ENCODE measurements at regions of chr4 and their contacts with region 1.

Region 1: GRCh38 chr4:175560604-175561003 is 251.5 kb downstream of the GPM6A start:
- DNase-seq: no peak
- ATAC-seq: no peak
- H3K4me3 ChIP-seq: no peak overlapping the region
- H3K27ac ChIP-seq: no peak overlapping the region
- H3K4me1 ChIP-seq: no peaks in the 10 kb centered on the region
- H3K27me3 ChIP-seq: no peaks in the 10 kb centered on the region
- CTCF ChIP-seq: peak in 5 of 12 donors; percentile 23 to 44 (median 32)
- POLR2A ChIP-seq: no peak

Region 2: DNA sequence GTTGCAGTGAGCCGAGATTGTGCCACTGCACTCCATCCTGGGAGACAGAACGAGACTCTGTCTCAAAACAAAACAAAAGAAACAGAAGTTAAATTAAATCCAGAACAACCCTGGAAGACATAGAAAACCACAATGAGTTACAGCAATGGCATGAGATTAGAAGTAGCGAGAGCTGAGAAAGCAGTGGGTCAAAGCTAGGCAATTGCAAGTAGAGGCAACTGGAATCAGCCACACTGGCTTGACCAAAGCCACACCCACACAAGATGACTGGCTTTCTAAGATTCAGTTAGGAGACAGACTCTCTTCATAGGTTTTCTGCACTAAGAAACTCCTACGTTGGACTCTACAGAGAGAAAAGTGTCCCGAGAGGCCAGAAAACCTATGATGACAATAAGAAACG is 191.5 kb before region 1 on chr4:
- intact Hi-C with region 1: no loop called
- DNase-seq: no peak
- ATAC-seq: no peak
- H3K4me3 ChIP-seq: no peak overlapping the region
- H3K27ac ChIP-seq: no peak overlapping the region
- H3K4me1 ChIP-seq: no peaks in the 10 kb centered on the region
- H3K27me3 ChIP-seq: no peaks in the 10 kb centered on the region
- CTCF ChIP-seq: no peak
- POLR2A ChIP-seq: no peak

Region 3: GRCh38 chr4:175419239-175419767 is 141.3 kb before region 1 on chr4:
- intact Hi-C with region 1: no loop called
- DNase-seq: no peak
- ATAC-seq: no peak
- H3K4me3 ChIP-seq: no peak overlapping the region
- H3K27ac ChIP-seq: no peak overlapping the region
- H3K4me1 ChIP-seq: no peaks in the 10 kb centered on the region
- H3K27me3 ChIP-seq: no peaks in the 10 kb centered on the region
- CTCF ChIP-seq: no peak
- POLR2A ChIP-seq: no peak

Region 4: DNA sequence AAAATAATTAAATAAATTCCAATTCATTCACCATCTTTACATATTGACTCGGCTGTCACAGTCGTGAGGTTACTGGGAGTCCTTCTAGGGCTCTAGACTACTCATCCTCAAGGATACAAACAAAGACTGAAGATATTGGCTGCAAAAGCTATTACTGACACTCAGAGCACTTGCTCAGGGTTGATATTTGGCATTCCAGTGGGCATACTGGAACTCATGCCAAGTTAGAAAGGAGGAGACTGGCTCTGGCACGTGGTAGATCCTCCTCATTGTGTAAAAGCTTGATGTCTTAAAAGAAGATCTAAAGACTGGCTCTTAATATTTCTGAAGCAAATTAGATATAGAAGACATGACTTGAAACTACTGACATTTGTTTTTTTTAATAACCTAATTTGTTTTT is 78.7 kb after region 1 on chr4:
- intact Hi-C with region 1: loop called in 1 of 10 experiments (anchors 2 kb)
- DNase-seq: no peak
- ATAC-seq: no peak
- H3K4me3 ChIP-seq: no peak overlapping the region
- H3K27ac ChIP-seq: no peak overlapping the region
- H3K4me1 ChIP-seq: no peaks in the 10 kb centered on the region
- H3K27me3 ChIP-seq: no peaks in the 10 kb centered on the region
- CTCF ChIP-seq: no peak
- POLR2A ChIP-seq: no peak

Region 5: GRCh38 chr4:175891851-175892250 is 331.2 kb after region 1 on chr4:
- intact Hi-C with region 1: loop called in 3 of 10 experiments (anchors 5 to 10 kb)
- DNase-seq: no peak
- ATAC-seq: no peak
- H3K4me3 ChIP-seq: no peak overlapping the region
- H3K27ac ChIP-seq: no peak overlapping the region
- H3K4me1 ChIP-seq: no peaks in the 10 kb centered on the region
- H3K27me3 ChIP-seq: no peaks in the 10 kb centered on the region
- CTCF ChIP-seq: peak in 10 of 12 donors; percentile 9 to 53 (median 37)
- POLR2A ChIP-seq: no peak

Region 6: GRCh38 chr4:176377780-176378179 is 817.2 kb after region 1 on chr4:
- intact Hi-C with region 1: no loop called
- DNase-seq: no peak
- ATAC-seq: peak in 1 of 4 donors; percentile 27
- H3K4me3 ChIP-seq: no peak overlapping the region
- H3K27ac ChIP-seq: no peak overlapping the region
- H3K4me1 ChIP-seq: no peaks in the 10 kb centered on the region
- H3K27me3 ChIP-seq: no peaks in the 10 kb centered on the region
- CTCF ChIP-seq: peak; percentile 22 to 62 (median 50)
- POLR2A ChIP-seq: no peak

Measured in heart left ventricle (tissue), 16 donors.